ENCODE measurements at regions of chr14 and their contacts with region 1.

Region 1: DNA sequence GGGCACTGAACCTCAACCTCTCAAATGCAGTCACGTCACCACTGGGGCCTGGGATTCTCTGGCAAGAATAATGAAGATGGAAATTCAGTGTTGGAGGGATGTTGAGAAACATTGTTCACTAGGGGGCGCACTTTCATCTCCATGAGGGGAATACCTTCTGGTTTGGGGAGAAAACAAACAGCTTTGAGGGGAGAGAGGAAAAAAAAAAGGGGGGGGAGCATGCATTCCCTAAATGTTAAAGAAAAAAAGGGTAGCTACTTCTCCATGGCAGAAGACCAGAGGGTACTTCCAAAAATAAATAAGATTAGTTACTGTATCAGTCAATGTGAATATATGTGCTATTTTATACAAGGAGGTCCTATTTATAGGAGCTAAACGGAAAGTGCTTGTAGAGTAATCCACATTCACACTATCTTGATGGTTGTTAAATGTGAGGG is 5.8 kb upstream of the TBPL2 start:
- DNase-seq: peak; percentile 80
- H3K4me3 ChIP-seq: no peak overlapping the region
- H3K27ac ChIP-seq: no peak overlapping the region
- H3K4me1 ChIP-seq: peaks cover 39% of the 10 kb centered on the region
- H3K27me3 ChIP-seq: no peaks in the 10 kb centered on the region
- CTCF ChIP-seq: peak; percentile 58 to 65
- POLR2A ChIP-seq: no peak

Region 2: DNA sequence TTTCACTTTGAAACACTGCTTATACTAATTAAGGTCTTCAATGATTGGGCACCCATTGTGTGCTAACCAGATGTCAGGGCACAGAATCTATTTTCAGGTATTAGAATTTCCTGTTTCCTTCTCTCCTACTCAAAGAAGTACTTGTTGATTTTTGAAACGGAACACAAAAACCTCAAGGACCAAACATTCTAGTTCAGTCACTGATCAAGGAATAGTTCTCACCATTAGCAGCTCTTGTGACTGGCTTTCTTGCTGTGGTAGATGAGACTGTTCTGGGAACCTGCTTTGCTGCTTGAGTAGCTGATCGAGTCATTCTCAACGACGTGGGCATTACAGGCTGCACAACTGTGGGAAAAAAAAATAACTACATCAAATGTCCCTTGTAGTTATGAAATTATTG is 265.8 kb before region 1 on chr14:
- CTCF ChIA-PET with region 1: no interaction called
- POLR2A ChIA-PET with region 1: no interaction called
- dilution Hi-C with region 1: no loop called
- intact Hi-C with region 1: no loop called
- DNase-seq: peak; percentile 37
- H3K4me3 ChIP-seq: no peak overlapping the region
- H3K27ac ChIP-seq: peak overlapping the region; percentile 64
- H3K4me1 ChIP-seq: peaks cover 29% of the 10 kb centered on the region
- H3K27me3 ChIP-seq: no peaks in the 10 kb centered on the region
- CTCF ChIP-seq: no peak
- POLR2A ChIP-seq: no peak

Region 3: GRCh38 chr14:55556929-55557623 is 110.8 kb after region 1 on chr14:
- CTCF ChIA-PET with region 1: interaction called, 34 read pairs
- POLR2A ChIA-PET with region 1: no interaction called
- dilution Hi-C with region 1: no loop called
- intact Hi-C with region 1: no loop called
- DNase-seq: peak; percentile 94
- H3K4me3 ChIP-seq: no peak overlapping the region
- H3K27ac ChIP-seq: no peak overlapping the region
- H3K4me1 ChIP-seq: peaks cover 7% of the 10 kb centered on the region
- H3K27me3 ChIP-seq: no peaks in the 10 kb centered on the region
- CTCF ChIP-seq: no peak
- POLR2A ChIP-seq: no peak

Region 4: DNA sequence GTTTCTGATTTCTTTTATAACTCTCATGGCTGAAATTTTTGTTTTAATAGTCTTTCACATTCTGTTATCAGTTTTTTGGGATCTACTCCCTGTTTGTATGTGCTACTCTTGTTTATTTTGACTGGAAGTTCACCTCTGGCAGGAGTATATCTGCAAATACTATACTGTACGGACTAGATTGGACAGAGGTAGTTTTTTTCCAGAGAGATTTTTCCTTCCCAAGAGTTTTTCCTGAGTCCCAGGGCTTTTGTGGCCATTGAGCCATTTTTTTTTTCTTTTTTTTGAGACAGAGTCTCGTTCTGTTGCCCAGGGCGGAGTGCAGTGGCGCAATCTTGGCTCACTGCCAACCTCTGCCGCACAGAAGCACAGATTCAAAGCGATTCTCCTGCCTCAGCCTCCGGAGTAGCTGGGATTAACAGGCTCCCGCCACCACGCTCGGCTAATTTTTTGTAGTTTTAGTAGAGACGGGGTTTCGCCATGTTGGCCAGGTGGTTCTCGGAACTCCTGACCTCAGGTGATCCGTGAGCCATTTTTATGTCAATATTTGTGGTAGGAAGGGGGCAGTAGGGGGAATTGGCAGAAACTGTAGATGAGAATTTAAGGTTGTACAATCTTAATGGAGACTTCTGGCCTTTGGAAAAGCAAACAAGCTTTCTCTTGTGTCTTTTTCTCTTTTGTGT is 153.1 kb after region 1 on chr14:
- CTCF ChIA-PET with region 1: interaction called, 30 read pairs
- POLR2A ChIA-PET with region 1: no interaction called
- dilution Hi-C with region 1: no loop called
- intact Hi-C with region 1: no loop called
- DNase-seq: no peak
- H3K4me3 ChIP-seq: no peak overlapping the region
- H3K27ac ChIP-seq: no peak overlapping the region
- H3K4me1 ChIP-seq: peaks cover 16% of the 10 kb centered on the region
- H3K27me3 ChIP-seq: no peaks in the 10 kb centered on the region
- CTCF ChIP-seq: no peak
- POLR2A ChIP-seq: no peak

Region 5: DNA sequence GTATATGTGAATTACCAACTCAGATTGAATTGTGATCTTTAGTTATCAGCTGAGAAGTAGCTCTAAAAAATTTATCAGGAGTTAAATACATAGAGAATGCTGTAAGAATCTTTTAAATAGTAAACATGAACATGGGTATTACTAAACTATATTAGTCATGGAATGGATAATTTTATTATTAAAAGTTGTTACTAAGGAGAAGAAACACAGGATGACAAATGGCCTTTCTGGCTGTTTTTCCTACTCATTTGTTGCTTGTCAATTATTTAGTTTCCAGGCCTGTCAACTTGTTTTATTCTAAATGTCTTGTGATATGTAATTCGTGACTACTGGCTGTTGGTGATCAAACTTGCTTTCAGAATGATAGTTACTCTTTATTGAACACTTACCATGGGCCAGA is 192.4 kb after region 1 on chr14:
- CTCF ChIA-PET with region 1: interaction called, 51 read pairs
- POLR2A ChIA-PET with region 1: no interaction called
- dilution Hi-C with region 1: no loop called
- intact Hi-C with region 1: loop called (anchors 10 kb)
- DNase-seq: peak; percentile 16
- H3K4me3 ChIP-seq: no peak overlapping the region
- H3K27ac ChIP-seq: no peak overlapping the region
- H3K4me1 ChIP-seq: no peaks in the 10 kb centered on the region
- H3K27me3 ChIP-seq: no peaks in the 10 kb centered on the region
- CTCF ChIP-seq: no peak
- POLR2A ChIP-seq: no peak

Region 6: GRCh38 chr14:55689981-55690863 is 244.0 kb after region 1 on chr14:
- CTCF ChIA-PET with region 1: interaction called, 18 read pairs
- POLR2A ChIA-PET with region 1: no interaction called
- dilution Hi-C with region 1: no loop called
- intact Hi-C with region 1: loop called (anchors 5 kb)
- DNase-seq: peak; percentile 73
- H3K4me3 ChIP-seq: peak overlapping the region in 2 of 3 experiments; percentile 11 to 47
- H3K27ac ChIP-seq: peak overlapping the region; percentile 80
- H3K4me1 ChIP-seq: peaks cover 20% of the 10 kb centered on the region
- H3K27me3 ChIP-seq: no peaks in the 10 kb centered on the region
- CTCF ChIP-seq: no peak
- POLR2A ChIP-seq: no peak

Region 7: DNA sequence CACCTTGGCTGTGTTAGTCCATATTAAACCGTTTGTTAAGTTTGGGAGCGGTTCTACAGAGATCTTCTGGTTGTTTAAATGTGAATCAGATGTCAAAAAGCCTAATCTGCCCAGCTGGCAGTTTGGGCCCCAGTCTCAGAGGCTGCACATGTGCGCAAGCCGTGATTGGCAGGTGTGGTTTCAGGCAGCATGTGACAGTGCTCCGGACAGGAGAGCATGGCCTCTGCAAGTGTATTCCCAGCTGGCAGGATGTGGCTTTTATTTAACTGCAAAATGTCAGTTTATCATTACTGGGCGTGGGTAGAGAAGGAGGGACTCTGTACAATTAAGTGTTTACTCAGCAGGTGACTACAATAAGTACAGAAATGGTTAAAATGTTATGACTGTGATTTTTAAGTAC is 749.5 kb after region 1 on chr14:
- CTCF ChIA-PET with region 1: no interaction called
- POLR2A ChIA-PET with region 1: no interaction called
- dilution Hi-C with region 1: no loop called
- intact Hi-C with region 1: loop called (anchors 5 kb)
- DNase-seq: peak; percentile 31
- H3K4me3 ChIP-seq: no peak overlapping the region
- H3K27ac ChIP-seq: no peak overlapping the region
- H3K4me1 ChIP-seq: peaks cover 19% of the 10 kb centered on the region
- H3K27me3 ChIP-seq: no peaks in the 10 kb centered on the region
- CTCF ChIP-seq: no peak
- POLR2A ChIP-seq: no peak

Region 8: GRCh38 chr14:56491299-56492285 is 1045.4 kb after region 1 on chr14:
- CTCF ChIA-PET with region 1: interaction called, 87 read pairs
- POLR2A ChIA-PET with region 1: no interaction called
- dilution Hi-C with region 1: no loop called
- intact Hi-C with region 1: loop called (anchors 2 kb)
- DNase-seq: peak; percentile 68
- H3K4me3 ChIP-seq: no peak overlapping the region
- H3K27ac ChIP-seq: no peak overlapping the region
- H3K4me1 ChIP-seq: no peaks in the 10 kb centered on the region
- H3K27me3 ChIP-seq: peaks cover 2 to 6% of the 10 kb centered on the region in 2 experiments
- CTCF ChIP-seq: peak; percentile 61 to 64
- POLR2A ChIP-seq: no peak

Measured in endothelial cell of umbilical vein (primary cell).